ENCODE measurements at regions of chr6 and their contacts with region 1.

Region 1: GRCh38 chr6:136317021-136317694 is 27.5 kb upstream of the BCLAF1 start:
- DNase-seq: peak; percentile 41
- H3K4me3 Mint-ChIP-seq: no peak overlapping the region
- H3K27ac Mint-ChIP-seq: no peak overlapping the region
- H3K4me1 Mint-ChIP-seq: peaks cover 8% of the 10 kb centered on the region
- H3K27me3 Mint-ChIP-seq: peaks cover 12% of the 10 kb centered on the region

Region 2: DNA sequence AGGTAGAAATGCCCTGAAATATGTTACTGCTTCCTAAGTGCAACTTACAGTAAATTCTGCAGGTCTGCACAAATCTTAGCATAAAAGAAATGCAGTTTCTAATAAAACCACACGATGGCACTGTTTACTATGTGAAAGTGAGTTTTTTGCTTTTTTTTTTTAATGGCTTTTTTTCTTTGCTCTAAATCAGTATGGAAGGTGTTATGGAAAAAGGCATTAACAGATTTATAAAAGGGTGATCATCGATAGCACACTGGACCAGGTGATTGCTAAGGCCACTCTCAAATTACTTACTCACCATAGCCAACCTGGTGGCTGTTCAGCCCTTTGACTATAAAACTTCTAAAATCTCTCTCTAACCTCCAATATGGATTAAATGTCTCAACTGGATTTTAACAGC is 865.5 kb before region 1 on chr6:
- intact Hi-C with region 1: loop called (anchors 2 kb)
- DNase-seq: no peak
- H3K4me3 Mint-ChIP-seq: no peak overlapping the region
- H3K27ac Mint-ChIP-seq: no peak overlapping the region
- H3K4me1 Mint-ChIP-seq: peaks cover 7% of the 10 kb centered on the region
- H3K27me3 Mint-ChIP-seq: no peaks in the 10 kb centered on the region

Region 3: GRCh38 chr6:135675862-135676261 is 641.3 kb before region 1 on chr6:
- intact Hi-C with region 1: loop called (anchors 2 kb)
- DNase-seq: peak; percentile 17
- H3K4me3 Mint-ChIP-seq: no peak overlapping the region
- H3K27ac Mint-ChIP-seq: peak overlapping the region; percentile 75
- H3K4me1 Mint-ChIP-seq: peaks cover 41% of the 10 kb centered on the region
- H3K27me3 Mint-ChIP-seq: no peaks in the 10 kb centered on the region

Region 4: DNA sequence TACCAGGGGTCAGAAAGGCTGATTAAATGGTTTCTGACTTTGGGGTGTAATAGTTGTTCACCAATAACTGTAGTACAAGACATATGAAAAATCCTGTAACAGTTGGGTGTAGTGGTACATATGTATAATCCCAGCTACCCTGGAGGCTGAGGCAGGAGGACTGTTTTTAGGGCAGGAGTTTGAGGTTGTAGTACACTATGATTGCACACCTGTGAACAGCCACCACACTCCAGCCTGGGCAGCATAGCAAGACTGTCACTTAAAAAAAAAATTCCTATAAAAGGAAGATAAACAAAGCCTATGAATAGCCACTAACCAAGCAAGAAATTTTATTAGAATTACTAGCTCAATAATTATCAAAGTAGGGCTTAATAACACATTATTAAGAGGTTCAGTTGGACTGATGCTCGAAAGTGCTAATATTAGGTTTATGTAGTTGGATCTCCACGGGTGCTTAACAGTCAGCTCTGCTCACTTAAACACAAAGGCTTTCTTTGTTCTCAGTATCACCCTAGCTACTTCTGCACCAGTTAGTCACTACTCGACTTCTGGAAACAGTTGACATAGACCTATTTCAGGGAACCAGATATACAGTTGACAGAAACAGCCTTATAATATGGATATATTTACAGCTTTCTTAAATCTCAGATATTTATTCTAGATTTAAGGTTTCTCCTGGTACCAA is 180.0 kb before region 1 on chr6:
- intact Hi-C with region 1: no loop called
- DNase-seq: no peak
- H3K4me3 Mint-ChIP-seq: no peak overlapping the region
- H3K27ac Mint-ChIP-seq: no peak overlapping the region
- H3K4me1 Mint-ChIP-seq: peaks cover 3% of the 10 kb centered on the region
- H3K27me3 Mint-ChIP-seq: peaks cover 2% of the 10 kb centered on the region

Region 5: DNA sequence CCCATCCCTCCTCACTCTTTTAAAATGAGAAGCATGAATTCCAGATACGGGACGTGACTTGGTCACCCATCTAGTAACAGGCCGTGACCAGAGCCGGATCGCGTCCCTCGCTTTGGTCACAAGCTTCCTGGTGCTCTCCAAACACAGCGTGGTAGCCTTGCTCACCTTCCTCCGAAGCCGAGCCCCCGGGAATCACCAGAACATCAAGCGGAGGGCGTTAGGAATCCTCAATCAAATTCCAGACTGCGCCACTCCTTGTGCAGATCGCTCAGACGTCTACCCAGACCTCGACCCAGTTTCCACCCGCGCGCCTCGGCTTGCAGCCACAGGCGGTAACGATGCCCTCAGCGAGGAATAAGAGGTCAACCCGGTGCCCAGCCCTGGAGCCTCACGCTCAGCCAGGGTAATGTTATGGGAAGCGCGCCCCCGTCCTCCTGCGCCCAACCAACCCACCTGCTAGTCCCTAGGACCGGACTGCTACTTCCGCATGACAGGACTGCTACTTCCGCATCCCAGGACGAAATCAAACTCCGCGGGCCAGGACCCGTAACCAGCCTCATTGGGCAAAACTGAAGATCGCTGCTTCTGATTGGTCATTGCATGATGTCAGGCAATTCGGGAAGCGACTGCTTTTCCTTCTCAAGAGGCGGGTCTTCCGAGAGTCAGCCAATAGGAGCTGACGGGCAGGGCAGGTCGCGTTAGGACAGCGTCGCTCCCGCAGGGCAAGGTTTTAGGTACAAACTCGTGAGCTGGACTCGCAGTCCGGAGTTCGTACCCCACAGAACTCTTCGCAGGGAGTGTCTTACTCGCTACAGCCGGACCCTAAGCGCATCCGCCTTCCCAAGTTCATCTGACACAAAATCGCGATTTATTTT is 67.1 kb before region 1 on chr6 and contains the start of gene MTFR2:
- intact Hi-C with region 1: loop called (anchors 1 kb)
- DNase-seq: peak; percentile 95
- H3K4me3 Mint-ChIP-seq: peak within 1 kb of the TSS; percentile 94
- H3K27ac Mint-ChIP-seq: peak within 1 kb of the TSS; percentile 91
- H3K4me1 Mint-ChIP-seq: peaks cover 51% of the 10 kb centered on the region
- H3K27me3 Mint-ChIP-seq: no peaks in the 10 kb centered on the region
- total RNA-seq, gene MTFR2: 18.4 and 20.8 TPM in 2 replicates

Region 6: GRCh38 chr6:136289579-136290409 is 27.4 kb before region 1 on chr6 and contains the start of gene BCLAF1:
- intact Hi-C with region 1: loop called (anchors 5 kb)
- DNase-seq: peak; percentile 100
- H3K4me3 Mint-ChIP-seq: peak within 1 kb of the TSS; percentile 100
- H3K27ac Mint-ChIP-seq: peak within 1 kb of the TSS; percentile 100
- H3K4me1 Mint-ChIP-seq: peaks cover 32% of the 10 kb centered on the region
- H3K27me3 Mint-ChIP-seq: no peaks in the 10 kb centered on the region
- total RNA-seq, gene BCLAF1: 228 and 242 TPM in 2 replicates